ENCODE measurements at regions of chr6 and their contacts with region 1.

Region 1: GRCh38 chr6:34055223-34055933 is 90.5 kb downstream of the GRM4 start:
- DNase-seq: peak; percentile 43 to 50 (median 46)
- H3K4me3 ChIP-seq: no peak overlapping the region
- H3K4me3 Mint-ChIP-seq: no peak overlapping the region
- H3K27ac ChIP-seq: no peak overlapping the region
- H3K27ac Mint-ChIP-seq: no peak overlapping the region
- H3K4me1 ChIP-seq: no peaks in the 10 kb centered on the region
- H3K4me1 Mint-ChIP-seq: peaks cover 0 to 5% (median 4%) of the 10 kb centered on the region in 4 donors
- H3K27me3 ChIP-seq: no peaks in the 10 kb centered on the region
- H3K27me3 Mint-ChIP-seq: peaks cover 2 to 10% of the 10 kb centered on the region in 2 donors

Region 2: GRCh38 chr6:33771146-33772081 is 284.0 kb before region 1 on chr6:
- CTCF ChIA-PET with region 1: interaction called, 12 read pairs
- POLR2A ChIA-PET with region 1: no interaction called
- intact Hi-C with region 1: no loop called
- DNase-seq: peak; percentile 54 to 68 (median 60)
- H3K4me3 ChIP-seq: no peak overlapping the region
- H3K4me3 Mint-ChIP-seq: peak overlapping the region in 1 of 8 donors; percentile 29
- H3K27ac ChIP-seq: no peak overlapping the region
- H3K27ac Mint-ChIP-seq: peak overlapping the region in 6 of 7 donors; percentile 21 to 88 (median 50)
- H3K4me1 ChIP-seq: peaks cover 6% of the 10 kb centered on the region
- H3K4me1 Mint-ChIP-seq: peaks cover 10 to 15% (median 13%) of the 10 kb centered on the region in 4 donors
- H3K27me3 ChIP-seq: no peaks in the 10 kb centered on the region
- H3K27me3 Mint-ChIP-seq: no peaks in the 10 kb centered on the region

Measured in CD4-positive, alpha-beta memory T cell (primary cell).